CD8-positive, alpha-beta T cell (primary cell): ENCODE measurements at regions of chr2 and their contacts with region 1.

Region 1: DNA sequence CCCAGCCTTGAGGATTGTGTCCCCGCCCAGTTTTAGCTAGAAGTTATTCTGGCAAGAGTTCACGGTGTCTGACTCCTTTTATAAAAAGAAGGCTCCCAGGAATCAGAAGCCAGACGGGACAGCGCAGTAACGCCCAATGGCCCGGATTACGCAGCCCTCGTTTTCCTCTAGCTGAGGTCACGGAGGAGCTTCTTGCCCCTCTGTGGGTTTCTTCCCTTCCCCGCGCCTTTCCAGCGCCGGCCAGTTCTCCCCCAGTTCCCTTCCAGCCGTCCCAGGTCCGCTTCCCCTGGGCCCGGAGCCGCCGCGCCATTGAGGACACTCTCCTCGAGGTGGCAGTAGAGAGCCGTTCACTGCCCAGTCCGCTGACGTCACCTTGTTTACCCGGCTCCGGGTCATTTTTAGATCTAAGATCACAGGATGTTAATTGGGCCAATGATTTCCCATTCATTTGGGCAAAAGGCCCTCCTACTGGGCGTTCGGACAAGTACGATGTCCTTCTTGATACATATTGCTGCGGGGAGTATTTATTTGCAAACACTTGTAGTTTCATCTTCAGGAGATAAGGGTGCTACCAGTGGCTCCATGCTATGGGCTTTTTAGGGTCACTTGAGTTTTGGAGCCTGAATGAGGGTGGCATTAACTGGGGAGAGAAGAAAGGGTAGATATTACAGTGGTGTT is 81.5 kb upstream of the PPM1B start:
- DNase-seq: peak; percentile 68 to 91 (median 84)
- ATAC-seq: peak; percentile 98
- H3K4me3 ChIP-seq: peak overlapping the region; percentile 53 to 56
- H3K4me3 Mint-ChIP-seq: peak overlapping the region; percentile 87
- H3K27ac ChIP-seq: peak overlapping the region; percentile 58 to 64
- H3K27ac Mint-ChIP-seq: peak overlapping the region; percentile 94
- H3K4me1 ChIP-seq: peaks cover 9% of the 10 kb centered on the region
- H3K4me1 Mint-ChIP-seq: peaks cover 16% of the 10 kb centered on the region
- H3K27me3 ChIP-seq: no peaks in the 10 kb centered on the region
- H3K27me3 Mint-ChIP-seq: no peaks in the 10 kb centered on the region
- CTCF ChIP-seq: peak; percentile 90

Region 2: DNA sequence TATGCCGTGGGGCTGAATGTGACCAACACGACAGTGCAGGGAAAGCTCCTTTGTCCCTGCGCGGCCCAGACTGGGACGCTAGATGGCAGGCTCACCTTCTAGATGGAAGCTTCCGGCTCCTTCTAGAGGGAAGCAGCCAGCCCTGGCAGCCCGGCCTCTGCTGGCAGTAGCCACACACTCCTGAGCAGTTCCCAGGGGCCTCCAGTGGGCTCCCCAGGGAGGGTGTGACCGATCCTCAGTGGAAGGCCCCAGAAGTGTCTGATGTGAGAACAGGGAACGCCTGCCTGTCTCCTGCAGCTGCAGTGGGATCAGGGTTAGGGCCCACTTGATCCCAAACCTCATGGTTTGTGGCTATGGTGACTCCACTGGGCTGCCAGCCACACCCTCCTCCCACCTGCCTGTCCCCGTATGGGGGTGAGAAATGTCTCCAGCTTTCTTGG is 42.9 kb before region 1 on chr2:
- CTCF ChIA-PET with region 1: interaction called, 8 read pairs
- POLR2A ChIA-PET with region 1: no interaction called
- intact Hi-C with region 1: loop called in 1 of 2 experiments (anchors 1 kb)
- DNase-seq: peak; percentile 50 to 84 (median 73)
- ATAC-seq: peak; percentile 99
- H3K4me3 ChIP-seq: no peak overlapping the region
- H3K4me3 Mint-ChIP-seq: no peak overlapping the region
- H3K27ac ChIP-seq: no peak overlapping the region
- H3K27ac Mint-ChIP-seq: no peak overlapping the region
- H3K4me1 ChIP-seq: no peaks in the 10 kb centered on the region
- H3K4me1 Mint-ChIP-seq: peaks cover 2% of the 10 kb centered on the region
- H3K27me3 ChIP-seq: no peaks in the 10 kb centered on the region
- H3K27me3 Mint-ChIP-seq: peaks cover 5% of the 10 kb centered on the region
- CTCF ChIP-seq: peak; percentile 76

Region 3: GRCh38 chr2:44167940-44168680 is 80.9 kb after region 1 on chr2:
- CTCF ChIA-PET with region 1: interaction called, 3 read pairs
- POLR2A ChIA-PET with region 1: no interaction called
- intact Hi-C with region 1: loop called (anchors 1 to 5 kb)
- DNase-seq: peak; percentile 92 to 100 (median 96)
- ATAC-seq: peak; percentile 77
- H3K4me3 ChIP-seq: peak overlapping the region; percentile 57 to 79
- H3K4me3 Mint-ChIP-seq: peak overlapping the region; percentile 99
- H3K27ac ChIP-seq: peak overlapping the region; percentile 95 to 97
- H3K27ac Mint-ChIP-seq: peak overlapping the region; percentile 99
- H3K4me1 ChIP-seq: peaks cover 22% of the 10 kb centered on the region
- H3K4me1 Mint-ChIP-seq: peaks cover 38% of the 10 kb centered on the region
- H3K27me3 ChIP-seq: no peaks in the 10 kb centered on the region
- H3K27me3 Mint-ChIP-seq: no peaks in the 10 kb centered on the region
- CTCF ChIP-seq: no peak

Region 4: GRCh38 chr2:44291281-44292248 is 204.4 kb after region 1 on chr2:
- CTCF ChIA-PET with region 1: interaction called, 6 read pairs
- POLR2A ChIA-PET with region 1: no interaction called
- intact Hi-C with region 1: loop called (anchors 1 to 2 kb)
- DNase-seq: peak in 2 of 9 experiments; percentile 6 to 21
- ATAC-seq: no peak
- H3K4me3 ChIP-seq: no peak overlapping the region
- H3K4me3 Mint-ChIP-seq: no peak overlapping the region
- H3K27ac ChIP-seq: no peak overlapping the region
- H3K27ac Mint-ChIP-seq: no peak overlapping the region
- H3K4me1 ChIP-seq: no peaks in the 10 kb centered on the region
- H3K4me1 Mint-ChIP-seq: peaks cover 9% of the 10 kb centered on the region
- H3K27me3 ChIP-seq: no peaks in the 10 kb centered on the region
- H3K27me3 Mint-ChIP-seq: peaks cover 11% of the 10 kb centered on the region
- CTCF ChIP-seq: no peak

Region 5: DNA sequence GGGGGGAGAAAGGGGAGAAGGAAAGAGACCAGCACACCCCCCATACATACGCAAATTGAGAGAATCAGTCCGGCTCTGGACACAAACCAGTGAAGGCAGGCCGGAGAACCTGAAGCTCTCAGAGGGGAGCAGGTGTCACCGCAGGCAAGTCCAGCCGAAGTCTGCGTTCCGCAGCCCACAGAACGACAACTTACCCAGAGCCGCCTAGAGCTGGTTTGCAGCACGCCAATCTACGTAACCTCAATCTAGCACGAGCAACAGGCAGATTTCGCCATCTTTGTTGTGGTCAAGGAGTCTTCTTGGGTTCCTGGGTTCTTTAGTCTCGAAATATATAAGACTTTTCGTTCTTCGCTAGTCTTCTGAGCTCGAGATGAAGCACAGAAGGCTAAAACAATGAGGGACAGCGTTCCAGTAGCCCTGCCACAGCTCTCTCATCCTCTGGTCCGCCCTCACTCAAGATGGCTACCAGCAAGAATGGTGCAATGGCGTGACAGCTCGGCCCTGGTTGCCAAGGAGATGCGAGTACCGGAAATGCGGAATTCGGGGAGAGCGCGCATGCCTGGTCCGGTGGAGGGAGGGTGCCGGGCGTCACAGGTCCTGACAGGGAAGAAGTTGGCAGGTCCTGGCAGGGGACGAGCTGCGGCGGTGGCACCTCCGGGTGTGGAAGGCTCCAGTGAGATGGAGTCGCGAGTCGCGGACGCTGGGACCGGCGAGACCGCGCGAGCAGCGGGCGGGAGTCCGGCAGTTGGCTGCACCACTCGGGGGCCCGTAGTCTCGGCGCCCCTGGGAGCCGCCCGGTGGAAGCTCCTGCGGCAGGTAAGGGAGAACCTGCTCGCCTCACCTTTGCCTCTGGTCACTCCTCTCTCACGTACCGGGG is 274.4 kb after region 1 on chr2 and contains the starts of genes CAMKMT and PREPL:
- CTCF ChIA-PET with region 1: interaction called, 6 read pairs
- POLR2A ChIA-PET with region 1: interaction called, 5 read pairs
- intact Hi-C with region 1: loop called in 1 of 2 experiments (anchors 1 kb)
- DNase-seq: peak; percentile 97 to 99 (median 98)
- ATAC-seq: peak; percentile 88
- H3K4me3 ChIP-seq: peak within 1 kb of the TSS; percentile 74 to 81
- H3K4me3 Mint-ChIP-seq: peak within 1 kb of the TSS; percentile 98
- H3K27ac ChIP-seq: peak within 1 kb of the TSS; percentile 93 to 98
- H3K27ac Mint-ChIP-seq: peak within 1 kb of the TSS; percentile 100
- H3K4me1 ChIP-seq: peaks cover 24% of the 10 kb centered on the region
- H3K4me1 Mint-ChIP-seq: peaks cover 61% of the 10 kb centered on the region
- H3K27me3 ChIP-seq: no peaks in the 10 kb centered on the region
- H3K27me3 Mint-ChIP-seq: no peaks in the 10 kb centered on the region
- CTCF ChIP-seq: no peak
- total RNA-seq, gene CAMKMT: 12.4 to 13.0 TPM
- total RNA-seq, gene PREPL: 26.6 to 27.9 TPM

Region 6: DNA sequence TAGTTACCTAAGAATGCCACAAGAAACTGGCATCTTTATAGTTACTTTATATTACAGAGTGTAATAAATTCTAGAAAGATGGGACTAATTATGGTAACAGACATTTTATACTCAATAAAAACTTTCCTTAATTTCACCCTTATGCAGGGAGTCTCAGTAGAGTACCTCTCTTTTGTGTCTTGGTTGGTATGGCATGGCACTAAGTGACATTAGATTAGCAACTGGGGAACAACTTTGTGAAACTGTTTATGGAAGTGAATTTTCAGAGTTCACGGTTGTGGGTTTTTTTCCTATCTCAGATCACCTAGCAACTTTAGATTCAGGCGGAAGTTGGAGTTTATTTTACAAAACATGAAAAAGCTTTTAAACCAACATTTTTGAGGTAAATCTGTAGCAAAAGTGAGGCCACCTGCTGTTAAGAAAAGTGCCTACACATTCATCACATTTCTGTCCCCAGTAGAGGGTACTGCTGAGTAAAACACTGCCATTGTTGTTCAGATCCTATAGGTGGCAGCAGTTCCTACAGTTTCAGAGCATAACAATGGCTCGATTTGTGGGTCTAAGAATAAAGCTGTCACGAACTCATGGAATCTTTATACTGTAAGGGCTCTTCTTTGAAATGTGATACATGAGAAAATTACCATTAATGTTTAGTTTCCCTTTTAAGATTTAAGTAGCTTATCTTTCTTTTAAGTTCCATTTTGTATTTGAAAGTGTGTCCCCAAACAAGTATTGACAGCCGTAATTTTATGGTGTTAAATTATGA is 392.1 kb after region 1 on chr2:
- CTCF ChIA-PET with region 1: interaction called, 5 read pairs
- POLR2A ChIA-PET with region 1: no interaction called
- intact Hi-C with region 1: loop called (anchors 1 to 5 kb)
- DNase-seq: peak in 8 of 9 experiments; percentile 1 to 82 (median 26)
- ATAC-seq: peak; percentile 100
- H3K4me3 ChIP-seq: no peak overlapping the region
- H3K4me3 Mint-ChIP-seq: no peak overlapping the region
- H3K27ac ChIP-seq: no peak overlapping the region
- H3K27ac Mint-ChIP-seq: no peak overlapping the region
- H3K4me1 ChIP-seq: no peaks in the 10 kb centered on the region
- H3K4me1 Mint-ChIP-seq: peaks cover 9% of the 10 kb centered on the region
- H3K27me3 ChIP-seq: peaks cover 0 to 2% of the 10 kb centered on the region in 2 experiments
- H3K27me3 Mint-ChIP-seq: no peaks in the 10 kb centered on the region
- CTCF ChIP-seq: peak; percentile 100